ENCODE measurements at regions of chr17 and their contacts with region 1.

Region 1: DNA sequence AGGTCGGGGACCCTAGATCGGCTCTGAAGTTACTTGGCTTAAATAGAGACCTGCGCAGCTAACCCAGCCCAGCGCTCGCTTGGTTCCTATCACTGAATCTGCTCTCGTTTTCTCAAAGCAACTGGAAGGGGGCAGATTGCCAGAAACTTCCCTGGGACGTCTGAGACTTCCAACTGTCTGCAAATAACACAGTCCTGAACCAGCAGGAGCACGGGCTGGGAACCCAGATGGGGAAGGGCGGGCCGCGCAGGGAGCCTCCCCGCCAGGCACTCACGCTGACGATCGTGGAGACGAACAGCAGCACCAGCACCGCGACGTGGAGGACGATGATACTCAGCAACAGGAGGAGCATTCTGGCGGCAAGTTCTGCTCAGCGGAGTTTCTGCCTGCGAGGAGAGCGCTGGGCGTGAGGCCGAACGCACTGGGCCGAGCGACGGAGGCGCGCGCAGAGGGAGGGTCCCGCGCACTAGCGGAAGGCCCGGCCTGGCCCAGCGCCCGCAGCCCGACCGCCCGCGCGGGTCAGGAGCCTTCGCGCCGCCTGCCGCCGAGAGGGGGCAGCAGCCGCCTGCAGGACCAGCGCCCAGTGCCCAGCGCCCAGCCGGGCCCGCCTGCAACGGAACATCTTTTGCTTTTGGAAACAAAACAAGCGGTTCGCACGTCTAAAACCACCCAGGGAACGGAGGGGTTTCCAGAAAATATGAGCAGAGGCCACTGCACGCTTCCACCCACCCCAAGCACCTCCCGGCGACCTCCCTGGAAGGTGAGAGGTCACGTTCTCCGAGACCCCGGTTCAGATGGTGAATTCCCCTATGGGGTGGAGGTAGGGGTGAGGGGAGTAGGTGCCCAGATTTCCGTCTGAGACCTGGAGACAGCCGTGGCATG is 4.5 kb downstream of the PMP22 start:
- DNase-seq: peak; percentile 96
- ATAC-seq: peak; percentile 64

Region 2: DNA sequence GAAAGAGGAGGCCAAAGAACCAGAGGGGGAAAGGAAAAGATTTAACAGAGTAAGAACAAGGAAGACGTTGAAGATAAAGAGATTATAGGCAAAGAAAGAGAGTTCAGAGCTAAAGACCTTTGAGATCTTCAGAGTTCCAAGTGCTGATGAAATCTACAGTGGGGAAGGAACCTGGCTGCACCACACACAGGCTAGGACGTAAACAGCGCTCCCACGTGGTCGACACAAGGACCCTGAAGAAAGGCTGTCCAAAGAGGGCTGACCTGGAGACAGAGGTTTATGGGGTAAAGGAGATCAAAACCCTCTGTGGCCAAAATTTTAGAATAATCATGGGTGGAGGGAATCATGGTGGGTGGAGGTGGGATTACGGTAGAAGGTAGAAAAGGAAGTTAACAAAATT is 117.1 kb before region 1 on chr17:
- intact Hi-C with region 1: no loop called
- DNase-seq: no peak
- ATAC-seq: no peak

Region 3: DNA sequence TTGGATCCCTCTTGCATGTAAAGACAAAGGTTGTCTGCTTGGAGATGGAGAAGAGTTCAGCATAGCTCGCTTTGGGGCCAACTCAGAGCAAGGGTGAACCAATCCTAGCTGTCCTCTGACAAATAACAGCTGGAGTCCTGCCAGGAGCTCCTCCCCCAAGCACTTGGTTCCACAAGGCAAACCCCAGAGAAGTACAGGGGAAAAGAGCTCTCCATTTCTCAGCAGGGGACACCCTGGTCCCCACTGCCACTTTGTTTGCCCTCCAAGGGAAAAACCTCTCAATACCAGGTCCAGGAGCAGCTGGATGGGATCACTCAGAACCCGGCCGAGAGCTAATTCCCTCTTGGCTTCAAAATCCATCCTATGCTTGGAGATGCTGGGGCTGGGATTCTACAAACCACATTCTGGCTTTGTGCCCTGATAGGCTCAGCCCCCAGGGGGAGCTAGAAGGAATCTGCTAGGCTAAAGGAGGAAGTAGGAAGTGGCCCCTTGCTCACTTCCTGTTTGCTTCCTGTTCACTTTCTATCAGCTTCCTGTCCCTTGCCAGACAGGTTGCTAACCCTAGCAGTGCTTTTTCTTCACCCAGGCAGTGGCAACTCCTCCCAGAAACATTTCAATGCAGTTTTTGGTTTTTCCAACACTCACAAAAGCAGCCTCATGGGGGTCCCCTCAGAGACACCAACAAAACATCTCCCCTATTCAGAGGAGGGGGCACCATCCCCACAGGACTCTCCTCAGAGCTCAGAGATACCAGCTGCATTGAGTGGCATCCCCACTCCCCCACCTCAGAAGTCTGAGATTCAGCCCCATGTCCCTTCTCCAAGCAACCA is 176.1 kb after region 1 on chr17:
- intact Hi-C with region 1: loop called (anchors 10 kb)
- DNase-seq: peak; percentile 83
- ATAC-seq: peak; percentile 68

Region 4: GRCh38 chr17:15502369-15503112 is 241.9 kb after region 1 on chr17:
- intact Hi-C with region 1: loop called (anchors 10 kb)
- DNase-seq: peak; percentile 94
- ATAC-seq: peak; percentile 95